Sigmoid colon (tissue), 7 donors: ENCODE measurements at regions of chr17 and their contacts with region 1.

Region 1: GRCh38 chr17:74457146-74457819 is 9.2 kb upstream of the CD300A start:
- DNase-seq: peak; percentile 88
- H3K4me3 ChIP-seq: no peak overlapping the region
- H3K27ac ChIP-seq: no peak overlapping the region
- H3K4me1 ChIP-seq: peaks cover 0 to 29% (median 23%) of the 10 kb centered on the region in 4 donors
- H3K27me3 ChIP-seq: no peaks in the 10 kb centered on the region
- CTCF ChIP-seq: peak; percentile 97 to 98 (median 97)
- EP300 ChIP-seq: no peak
- POLR2A ChIP-seq: no peak

Region 2: DNA sequence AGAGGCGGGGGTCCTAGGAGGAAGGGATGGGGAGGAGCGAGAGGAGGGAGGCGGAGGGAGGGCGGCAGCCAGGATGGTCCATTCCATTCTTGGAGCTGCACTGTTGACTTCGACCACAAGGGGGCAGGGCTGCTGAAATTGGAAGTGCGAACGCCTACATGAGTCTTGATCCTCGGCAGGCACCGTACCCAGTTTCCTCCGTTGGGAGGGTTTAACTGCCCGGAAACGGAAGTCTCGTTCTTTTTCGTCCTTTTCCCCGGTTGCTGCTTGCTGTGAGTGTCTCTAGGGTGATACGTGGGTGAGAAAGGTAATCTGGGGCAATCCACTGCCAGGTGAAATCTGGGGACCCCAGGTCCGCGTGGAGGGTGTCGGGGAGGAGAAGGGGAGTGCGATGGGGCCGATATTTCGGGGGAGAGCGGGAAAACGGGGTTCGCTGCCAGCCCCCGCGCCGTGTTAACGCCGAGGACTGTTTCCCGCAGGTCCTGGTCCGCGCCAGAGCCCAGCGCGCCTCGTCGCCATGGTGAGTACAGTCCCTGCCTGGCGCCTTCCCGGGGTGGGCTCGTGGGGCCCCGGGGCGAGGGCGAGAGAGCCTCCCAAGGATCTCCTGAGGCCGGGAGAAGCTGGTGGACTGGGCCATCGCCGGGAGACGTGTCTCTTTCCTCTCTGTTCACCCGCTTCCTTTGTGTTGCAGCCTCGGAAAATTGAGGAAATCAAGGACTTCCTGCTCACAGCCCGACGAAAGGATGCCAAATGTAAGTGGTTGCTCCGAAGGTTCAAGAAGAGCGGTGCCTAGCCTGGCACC is 253.6 kb before region 1 on chr17 and contains the start of gene RPL38:
- intact Hi-C with region 1: loop called (anchors 5 kb)
- DNase-seq: peak; percentile 98
- H3K4me3 ChIP-seq: peak within 1 kb of the TSS; percentile 56 to 77 (median 76)
- H3K27ac ChIP-seq: peak within 1 kb of the TSS; percentile 79 to 87 (median 82)
- H3K4me1 ChIP-seq: peaks cover 0 to 55% (median 44%) of the 10 kb centered on the region in 4 donors
- H3K27me3 ChIP-seq: peaks cover 11 to 26% (median 14%) of the 10 kb centered on the region in 3 donors
- CTCF ChIP-seq: peak; percentile 90 to 97 (median 96)
- EP300 ChIP-seq: peak in 2 of 4 donors; percentile 48 to 79
- POLR2A ChIP-seq: peak; percentile 92 to 93
- total RNA-seq, gene RPL38: 215 to 718 (median 492) TPM

Region 3: GRCh38 chr17:74212913-74213791 is 244.1 kb before region 1 on chr17 and contains the start of gene TTYH2:
- intact Hi-C with region 1: loop called (anchors 5 kb)
- DNase-seq: peak; percentile 96
- H3K4me3 ChIP-seq: peak within 1 kb of the TSS; percentile 37 to 57 (median 55)
- H3K27ac ChIP-seq: peak within 1 kb of the TSS; percentile 73 to 79 (median 78)
- H3K4me1 ChIP-seq: peaks cover 0 to 56% (median 46%) of the 10 kb centered on the region in 4 donors
- H3K27me3 ChIP-seq: no peaks in the 10 kb centered on the region
- CTCF ChIP-seq: peak in 2 of 4 experiments; percentile 41 to 48
- EP300 ChIP-seq: no peak
- POLR2A ChIP-seq: peak in 1 of 2 donors; percentile 20
- total RNA-seq, gene TTYH2: 4.9 to 10.0 (median 7.0) TPM

Region 4: DNA sequence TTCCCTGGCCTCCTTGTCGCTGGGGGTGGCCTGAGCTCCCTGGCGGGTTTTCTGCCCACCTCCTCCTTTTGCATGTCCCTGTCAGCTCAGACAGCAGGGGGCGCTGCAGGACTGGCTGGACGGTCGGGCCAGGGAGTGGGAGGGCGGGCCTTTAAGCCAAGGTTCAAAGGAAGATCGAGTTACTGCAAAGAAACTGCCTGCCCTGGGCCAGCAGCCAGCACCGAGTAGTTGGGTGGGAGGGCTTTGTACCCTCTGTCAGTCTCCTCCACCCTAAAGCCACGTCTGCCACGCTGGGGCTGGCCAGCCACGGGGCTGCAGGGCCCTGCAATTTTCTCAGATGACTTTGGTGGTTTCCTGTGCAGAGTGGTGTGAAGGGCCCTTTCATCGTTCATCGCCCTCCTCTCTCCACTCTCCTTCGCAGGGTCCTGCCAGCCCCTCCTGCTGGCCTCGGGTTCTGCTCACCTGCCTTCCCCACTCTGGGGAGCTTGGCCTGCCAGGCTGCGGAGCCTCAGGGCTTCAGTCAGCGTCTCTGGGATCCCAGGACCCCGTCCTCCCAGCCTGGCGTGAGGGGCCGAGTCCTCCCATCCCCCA is 77.7 kb before region 1 on chr17:
- intact Hi-C with region 1: loop called (anchors 1 kb)
- DNase-seq: peak; percentile 94
- H3K4me3 ChIP-seq: peak overlapping the region in 2 of 4 donors; percentile 28 to 31
- H3K27ac ChIP-seq: peak overlapping the region in 3 of 4 donors; percentile 19 to 41 (median 32)
- H3K4me1 ChIP-seq: peaks cover 0 to 15% (median 13%) of the 10 kb centered on the region in 4 donors
- H3K27me3 ChIP-seq: no peaks in the 10 kb centered on the region
- CTCF ChIP-seq: peak; percentile 89 to 98 (median 97)
- EP300 ChIP-seq: no peak
- POLR2A ChIP-seq: no peak

Region 5: GRCh38 chr17:74430706-74431567 is 26.3 kb before region 1 on chr17:
- intact Hi-C with region 1: loop called (anchors 1 kb)
- DNase-seq: peak; percentile 94
- H3K4me3 ChIP-seq: peak overlapping the region; percentile 46 to 74 (median 58)
- H3K27ac ChIP-seq: peak overlapping the region; percentile 79 to 87 (median 82)
- H3K4me1 ChIP-seq: peaks cover 0 to 34% (median 23%) of the 10 kb centered on the region in 4 donors
- H3K27me3 ChIP-seq: peaks cover 0 to 11% (median 0%) of the 10 kb centered on the region in 3 donors
- CTCF ChIP-seq: no peak
- EP300 ChIP-seq: peak in 3 of 4 donors; percentile 42 to 74 (median 51)
- POLR2A ChIP-seq: peak; percentile 14 to 19

Region 6: DNA sequence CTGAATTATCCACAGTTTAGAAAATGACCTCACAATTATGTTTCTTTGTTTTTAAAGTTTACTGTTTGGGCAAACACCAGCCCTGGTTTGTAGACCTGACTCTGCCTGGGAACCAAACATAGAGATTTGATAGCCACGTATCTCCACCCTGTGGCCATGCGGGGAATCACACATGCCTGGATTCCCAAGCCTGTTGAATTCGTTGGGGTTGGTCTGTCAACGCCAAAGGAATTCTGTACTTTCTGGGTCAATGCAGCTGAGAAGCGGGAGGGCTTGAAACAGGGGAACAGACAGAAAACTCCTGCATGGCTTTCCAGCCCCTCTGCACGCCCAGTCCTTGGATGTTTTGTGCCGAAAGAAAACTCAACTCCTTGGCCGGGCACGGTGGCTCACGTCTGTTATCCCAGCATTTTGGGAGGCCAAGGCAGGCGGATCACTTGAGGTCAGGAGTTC is 36.1 kb after region 1 on chr17:
- intact Hi-C with region 1: no loop called
- DNase-seq: peak; percentile 81
- H3K4me3 ChIP-seq: no peak overlapping the region
- H3K27ac ChIP-seq: no peak overlapping the region
- H3K4me1 ChIP-seq: no peaks in the 10 kb centered on the region
- H3K27me3 ChIP-seq: no peaks in the 10 kb centered on the region
- CTCF ChIP-seq: peak; percentile 40 to 80 (median 77)
- EP300 ChIP-seq: no peak
- POLR2A ChIP-seq: no peak

Region 7: DNA sequence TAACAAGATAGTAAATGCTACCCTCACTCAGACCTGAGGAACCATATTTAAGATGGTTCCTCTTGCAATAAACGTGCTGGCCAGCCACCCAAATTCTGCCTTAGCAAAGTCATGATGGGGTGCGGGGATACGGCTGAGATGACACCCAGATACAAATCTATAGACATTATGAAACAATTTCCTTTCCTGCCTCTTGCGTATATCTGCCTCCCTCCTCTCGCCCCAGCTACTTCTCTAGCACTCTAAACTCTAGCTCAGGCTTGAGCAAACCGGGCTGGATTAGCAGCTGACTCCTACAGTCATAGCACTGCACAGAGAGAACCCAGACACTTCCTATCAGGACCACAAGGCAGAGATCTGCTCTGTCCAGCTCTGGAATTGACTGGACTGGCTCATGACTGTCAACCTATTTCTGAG is 233.1 kb after region 1 on chr17:
- intact Hi-C with region 1: no loop called
- DNase-seq: peak; percentile 67
- H3K4me3 ChIP-seq: no peak overlapping the region
- H3K27ac ChIP-seq: no peak overlapping the region
- H3K4me1 ChIP-seq: no peaks in the 10 kb centered on the region
- H3K27me3 ChIP-seq: peaks cover 0 to 4% (median 0%) of the 10 kb centered on the region in 3 donors
- CTCF ChIP-seq: no peak
- EP300 ChIP-seq: no peak
- POLR2A ChIP-seq: no peak

Region 8: GRCh38 chr17:74759243-74759801 is 302.0 kb after region 1 on chr17:
- intact Hi-C with region 1: no loop called
- DNase-seq: no peak
- H3K4me3 ChIP-seq: no peak overlapping the region
- H3K27ac ChIP-seq: no peak overlapping the region
- H3K4me1 ChIP-seq: peaks cover 0 to 23% (median 19%) of the 10 kb centered on the region in 4 donors
- H3K27me3 ChIP-seq: no peaks in the 10 kb centered on the region
- CTCF ChIP-seq: no peak
- EP300 ChIP-seq: no peak
- POLR2A ChIP-seq: no peak

Region 9: DNA sequence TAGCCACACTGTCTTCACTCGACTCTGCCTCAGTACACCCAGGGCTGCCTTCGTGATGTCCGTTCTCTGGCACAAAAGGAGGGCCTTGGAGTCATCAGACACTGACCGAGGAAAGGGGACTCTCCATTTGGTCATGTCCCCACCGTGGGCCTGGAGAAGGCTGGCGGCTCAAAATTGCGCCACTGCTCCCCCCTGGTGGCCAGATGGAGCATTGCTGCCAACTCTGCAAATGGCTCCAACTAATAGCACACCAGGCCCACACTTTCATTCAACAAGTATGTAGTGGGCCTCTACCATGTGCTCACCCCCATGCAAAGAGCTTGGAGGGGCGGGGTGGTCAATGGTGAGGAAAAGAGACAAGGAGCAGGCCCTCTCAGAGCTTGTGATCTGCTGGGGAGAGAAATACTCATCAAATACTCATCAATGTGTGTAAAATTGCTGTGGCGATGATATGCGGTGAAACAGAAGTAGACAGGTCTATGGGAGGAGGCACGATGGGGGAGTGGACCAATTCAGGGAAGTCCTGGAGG is 407.6 kb after region 1 on chr17:
- intact Hi-C with region 1: loop called (anchors 5 kb)
- DNase-seq: peak; percentile 87
- H3K4me3 ChIP-seq: no peak overlapping the region
- H3K27ac ChIP-seq: no peak overlapping the region
- H3K4me1 ChIP-seq: peaks cover 0 to 24% (median 22%) of the 10 kb centered on the region in 4 donors
- H3K27me3 ChIP-seq: peaks cover 18 to 31% (median 20%) of the 10 kb centered on the region in 3 donors
- CTCF ChIP-seq: peak; percentile 89 to 96 (median 94)
- EP300 ChIP-seq: no peak
- POLR2A ChIP-seq: no peak